ENCODE measurements at regions of chr3 and their contacts with region 1.

Region 1: GRCh38 chr3:12948891-12949711 is 107.7 kb upstream of the RPL32 start:
- DNase-seq: peak; percentile 38
- H3K4me3 Mint-ChIP-seq: no peak overlapping the region
- H3K27ac Mint-ChIP-seq: peak overlapping the region; percentile 60
- H3K4me1 Mint-ChIP-seq: peaks cover 38% of the 10 kb centered on the region
- H3K27me3 Mint-ChIP-seq: no peaks in the 10 kb centered on the region

Region 2: DNA sequence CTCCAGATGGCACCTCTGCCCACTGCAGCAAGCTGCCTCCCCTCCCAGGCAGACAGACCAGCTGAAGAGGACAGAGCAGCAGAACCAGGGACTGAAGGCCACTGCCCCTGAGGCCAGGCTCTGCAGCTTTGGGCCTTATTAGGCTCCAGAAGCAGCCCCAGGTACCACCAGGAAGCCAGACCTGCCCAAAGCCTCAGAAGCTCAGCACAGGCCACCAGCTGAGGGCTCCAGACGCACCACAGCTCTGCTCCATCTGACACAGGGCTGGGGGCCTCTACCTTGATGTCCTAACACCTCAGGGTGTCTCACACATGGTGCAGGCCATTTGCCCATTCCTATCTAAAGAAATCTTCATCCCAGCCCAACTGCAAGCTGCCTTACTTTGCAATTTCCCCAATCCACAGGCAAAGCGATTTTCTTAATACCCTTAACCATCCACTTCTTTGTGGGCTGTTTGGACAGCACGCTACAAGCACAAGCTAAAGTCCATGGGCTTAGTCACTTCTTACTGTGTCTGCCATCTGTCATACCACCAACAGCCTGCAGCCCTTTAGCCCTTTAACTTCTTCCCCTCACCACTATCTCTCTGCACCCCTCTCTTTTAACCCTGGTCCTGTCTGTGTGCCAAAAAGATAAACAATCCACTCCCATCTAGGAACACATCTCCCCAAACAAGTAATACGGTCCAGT is 12.1 kb after region 1 on chr3:
- CTCF ChIA-PET with region 1: interaction called, 10 read pairs
- POLR2A ChIA-PET with region 1: no interaction called
- DNase-seq: no peak
- H3K4me3 Mint-ChIP-seq: no peak overlapping the region
- H3K27ac Mint-ChIP-seq: no peak overlapping the region
- H3K4me1 Mint-ChIP-seq: peaks cover 77% of the 10 kb centered on the region
- H3K27me3 Mint-ChIP-seq: no peaks in the 10 kb centered on the region